MCF 10A (cell line): ENCODE measurements at regions of chr14 and their contacts with region 1.

Region 1: DNA sequence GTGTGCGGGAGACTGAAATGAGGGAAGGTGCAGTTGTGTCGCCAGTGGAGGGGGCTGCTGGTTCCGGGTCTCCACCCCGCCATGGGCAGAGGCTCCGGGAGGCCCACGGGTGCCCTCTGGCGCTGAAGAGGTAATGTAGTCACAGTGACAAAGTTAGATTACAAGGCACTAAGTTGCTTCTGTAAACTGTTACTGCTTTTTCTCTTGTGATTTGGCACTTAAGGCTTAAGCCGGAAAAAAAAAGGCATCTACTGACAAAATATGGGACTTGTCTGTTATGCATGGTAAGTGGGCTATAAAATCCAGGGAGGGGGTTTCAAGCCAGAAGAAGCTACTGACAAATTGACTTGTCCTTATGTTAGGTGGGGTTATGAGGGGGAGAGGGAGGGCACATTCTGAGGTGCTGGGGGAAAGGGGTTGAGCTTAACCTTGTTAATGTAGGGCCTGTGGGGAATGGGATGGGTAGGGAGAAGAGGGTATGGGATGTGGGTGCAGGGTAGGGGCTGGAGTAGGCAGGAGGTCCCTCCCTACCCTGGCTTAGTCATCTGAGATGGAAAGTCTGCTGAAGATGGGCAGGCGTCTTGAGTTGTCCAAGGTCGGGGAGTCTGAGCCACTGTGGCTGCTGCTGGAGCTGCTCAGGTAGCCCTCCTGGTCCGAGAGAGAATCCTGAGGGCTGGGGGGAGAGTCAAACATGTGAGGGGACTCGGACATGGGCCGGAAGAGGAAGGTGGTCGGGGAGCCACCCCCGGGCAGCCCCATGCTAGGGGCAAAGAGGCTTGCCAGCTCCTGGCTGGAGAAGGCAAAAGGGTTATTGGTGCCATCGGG is 3.7 kb downstream of the ZFP36L1 start:
- DNase-seq: peak; percentile 79
- H3K4me3 Mint-ChIP-seq: peak overlapping the region; percentile 98
- H3K27ac Mint-ChIP-seq: peak overlapping the region; percentile 97
- H3K4me1 Mint-ChIP-seq: peaks cover 30% of the 10 kb centered on the region
- H3K27me3 Mint-ChIP-seq: no peaks in the 10 kb centered on the region
- CTCF ChIP-seq: peak; percentile 69

Region 2: GRCh38 chr14:68232300-68233055 is 556.7 kb before region 1 on chr14:
- CTCF ChIA-PET with region 1: interaction called, 4 read pairs
- POLR2A ChIA-PET with region 1: interaction called, 15 read pairs
- intact Hi-C with region 1: no loop called
- DNase-seq: peak; percentile 99
- H3K4me3 Mint-ChIP-seq: no peak overlapping the region
- H3K27ac Mint-ChIP-seq: no peak overlapping the region
- H3K4me1 Mint-ChIP-seq: no peaks in the 10 kb centered on the region
- H3K27me3 Mint-ChIP-seq: no peaks in the 10 kb centered on the region
- CTCF ChIP-seq: no peak

Region 3: DNA sequence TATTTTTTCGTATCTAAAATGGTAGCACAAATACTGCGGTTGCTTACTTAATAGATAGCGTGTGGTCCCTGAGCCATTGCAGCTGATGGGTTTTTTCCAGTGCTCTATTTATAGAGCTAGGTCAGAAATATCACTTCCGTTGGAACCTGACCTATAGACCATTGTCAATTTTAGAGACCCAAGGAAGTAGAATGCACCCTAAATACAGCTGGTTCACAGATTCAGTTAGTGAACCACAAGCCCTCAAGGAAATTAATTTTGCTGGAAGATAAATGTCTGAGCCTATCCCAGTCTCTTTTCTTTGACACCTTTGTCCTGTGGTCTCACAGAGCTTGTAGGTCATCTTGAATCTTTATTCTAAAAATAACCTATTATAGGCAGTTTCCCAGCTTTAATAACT is 387.4 kb before region 1 on chr14:
- CTCF ChIA-PET with region 1: interaction called, 3 read pairs
- POLR2A ChIA-PET with region 1: interaction called, 4 read pairs
- intact Hi-C with region 1: loop called (anchors 2 kb)
- DNase-seq: no peak
- H3K4me3 Mint-ChIP-seq: no peak overlapping the region
- H3K27ac Mint-ChIP-seq: peak overlapping the region; percentile 59
- H3K4me1 Mint-ChIP-seq: peaks cover 47% of the 10 kb centered on the region
- H3K27me3 Mint-ChIP-seq: no peaks in the 10 kb centered on the region
- CTCF ChIP-seq: no peak

Region 4: DNA sequence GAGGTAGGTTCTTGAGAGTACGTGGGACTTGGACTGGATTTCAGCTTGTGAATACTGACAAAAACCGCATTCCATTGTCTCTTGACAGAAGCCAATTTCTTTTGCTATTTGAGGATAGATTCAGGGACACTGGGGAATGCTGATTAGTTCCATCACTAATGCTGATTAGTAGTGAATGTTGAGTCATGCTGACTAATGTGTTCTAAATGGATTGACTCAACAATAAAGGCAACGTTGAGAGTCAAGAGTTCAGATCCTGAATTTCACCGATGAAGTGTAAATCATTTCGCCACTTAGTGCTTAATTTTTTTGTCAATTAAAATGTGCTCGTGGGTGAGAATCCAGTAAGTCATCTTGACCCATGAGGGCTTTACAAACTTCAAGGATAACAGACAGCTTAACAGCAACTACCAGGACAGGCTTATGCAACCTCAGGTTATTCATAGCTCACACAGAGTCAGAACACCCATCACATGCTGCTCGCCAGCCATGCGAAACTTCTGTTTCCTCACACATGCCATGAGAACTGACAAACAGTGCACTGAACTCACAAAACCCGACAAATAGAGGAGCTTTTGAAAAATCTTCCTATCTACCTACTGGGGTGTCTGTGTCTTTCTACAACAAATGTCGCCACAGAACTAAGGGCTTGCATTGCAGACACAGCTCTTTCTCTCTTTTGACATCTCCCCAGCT is 312.8 kb before region 1 on chr14:
- CTCF ChIA-PET with region 1: interaction called, 3 read pairs
- POLR2A ChIA-PET with region 1: interaction called, 16 read pairs
- intact Hi-C with region 1: no loop called
- DNase-seq: peak; percentile 90
- H3K4me3 Mint-ChIP-seq: peak overlapping the region; percentile 0
- H3K27ac Mint-ChIP-seq: peak overlapping the region; percentile 92
- H3K4me1 Mint-ChIP-seq: peaks cover 42% of the 10 kb centered on the region
- H3K27me3 Mint-ChIP-seq: no peaks in the 10 kb centered on the region
- CTCF ChIP-seq: no peak

Region 5: DNA sequence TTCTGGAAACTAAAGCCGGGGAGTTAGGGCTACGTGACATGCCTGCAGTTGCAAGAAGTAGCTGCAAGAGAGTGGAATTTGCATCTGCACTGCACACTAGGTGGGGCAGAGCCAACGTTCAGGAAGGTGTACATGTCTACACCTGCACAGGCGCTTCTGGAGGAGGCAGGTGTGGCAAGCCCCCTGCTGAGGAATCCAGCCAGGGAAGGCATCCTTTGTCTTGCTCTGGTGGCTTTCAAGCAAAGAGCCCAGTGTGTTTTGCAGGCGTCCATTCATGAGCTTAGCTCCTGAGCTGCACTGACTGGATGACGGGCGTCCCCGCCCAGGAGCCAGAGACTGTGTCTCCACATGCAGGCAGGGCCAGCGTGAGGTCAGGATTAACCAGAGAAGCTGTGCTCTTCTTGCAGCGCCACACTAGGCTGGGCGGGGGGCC is 112.7 kb before region 1 on chr14:
- CTCF ChIA-PET with region 1: interaction called, 4 read pairs
- POLR2A ChIA-PET with region 1: interaction called, 32 read pairs
- intact Hi-C with region 1: no loop called
- DNase-seq: peak; percentile 93
- H3K4me3 Mint-ChIP-seq: no peak overlapping the region
- H3K27ac Mint-ChIP-seq: peak overlapping the region; percentile 42
- H3K4me1 Mint-ChIP-seq: peaks cover 44% of the 10 kb centered on the region
- H3K27me3 Mint-ChIP-seq: no peaks in the 10 kb centered on the region
- CTCF ChIP-seq: no peak

Region 6: DNA sequence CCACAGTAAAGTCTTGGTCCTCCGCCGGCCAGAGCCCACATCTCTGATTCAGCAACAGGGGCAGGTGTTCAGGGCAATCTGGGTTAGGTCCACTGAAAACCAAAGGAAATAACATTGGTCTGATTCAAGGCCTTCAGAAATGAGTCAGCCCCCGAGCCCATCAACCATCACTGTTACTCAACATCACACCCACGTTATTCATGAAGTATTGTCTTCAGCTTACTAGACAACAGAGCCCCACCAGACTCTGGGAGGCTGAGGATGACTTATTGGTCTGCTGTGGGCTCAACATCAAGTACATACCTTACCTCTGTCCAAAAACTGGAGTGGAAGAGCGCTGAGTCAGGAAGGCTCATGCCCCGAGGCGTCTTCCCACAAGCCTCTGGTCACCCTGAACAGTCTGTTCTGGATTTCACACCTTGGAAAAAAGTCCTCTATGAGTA is 93.9 kb before region 1 on chr14:
- CTCF ChIA-PET with region 1: interaction called, 4 read pairs
- POLR2A ChIA-PET with region 1: interaction called, 51 read pairs
- intact Hi-C with region 1: loop called (anchors 1 kb)
- DNase-seq: peak; percentile 99
- H3K4me3 Mint-ChIP-seq: peak overlapping the region; percentile 40
- H3K27ac Mint-ChIP-seq: peak overlapping the region; percentile 96
- H3K4me1 Mint-ChIP-seq: peaks cover 44% of the 10 kb centered on the region
- H3K27me3 Mint-ChIP-seq: no peaks in the 10 kb centered on the region
- CTCF ChIP-seq: no peak

Region 7: GRCh38 chr14:68816262-68816942 is 27.2 kb after region 1 on chr14:
- CTCF ChIA-PET with region 1: interaction called, 52 read pairs
- POLR2A ChIA-PET with region 1: interaction called, 80 read pairs
- intact Hi-C with region 1: loop called (anchors 1 kb)
- DNase-seq: peak; percentile 85
- H3K4me3 Mint-ChIP-seq: peak overlapping the region; percentile 49
- H3K27ac Mint-ChIP-seq: peak overlapping the region; percentile 88
- H3K4me1 Mint-ChIP-seq: peaks cover 20% of the 10 kb centered on the region
- H3K27me3 Mint-ChIP-seq: no peaks in the 10 kb centered on the region
- CTCF ChIP-seq: peak; percentile 98